Caco-2 (cell line): ENCODE measurements at regions of chr7 and their contacts with region 1.

Region 1: DNA sequence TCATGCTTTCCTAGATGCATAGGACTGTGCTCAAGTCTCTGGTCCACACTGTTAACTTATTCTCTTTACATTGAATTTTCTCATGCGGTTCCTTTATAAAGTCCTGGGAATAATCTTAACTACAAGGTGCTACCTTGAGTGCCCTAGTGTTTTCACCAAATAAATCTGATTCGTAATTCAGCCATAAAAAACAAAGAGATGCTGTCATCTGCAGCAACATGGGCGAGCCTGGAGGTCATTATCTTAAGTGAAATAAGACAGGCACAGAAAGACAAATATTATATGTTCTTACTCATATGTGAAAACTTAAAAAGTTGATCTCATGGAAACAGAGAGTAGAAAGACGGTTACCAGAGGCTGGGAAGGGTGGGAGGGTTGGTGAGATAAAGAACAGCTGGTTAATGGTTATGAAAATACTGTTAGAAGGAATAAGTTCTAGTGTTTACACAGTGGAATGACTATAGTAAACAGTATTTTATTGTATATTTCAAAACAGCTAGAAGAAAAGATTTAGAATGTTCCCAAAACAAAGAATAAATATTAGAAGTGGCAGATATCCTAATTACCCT is 38.3 kb downstream of the NT5C3A start:
- DNase-seq: no peak
- H3K4me3 ChIP-seq: no peak overlapping the region
- H3K4me3 Mint-ChIP-seq: no peak overlapping the region
- H3K27ac Mint-ChIP-seq: no peak overlapping the region
- H3K4me1 ChIP-seq: no peaks in the 10 kb centered on the region
- H3K4me1 Mint-ChIP-seq: no peaks in the 10 kb centered on the region
- H3K27me3 ChIP-seq: no peaks in the 10 kb centered on the region
- H3K27me3 Mint-ChIP-seq: no peaks in the 10 kb centered on the region
- CTCF ChIP-seq: no peak

Region 2: DNA sequence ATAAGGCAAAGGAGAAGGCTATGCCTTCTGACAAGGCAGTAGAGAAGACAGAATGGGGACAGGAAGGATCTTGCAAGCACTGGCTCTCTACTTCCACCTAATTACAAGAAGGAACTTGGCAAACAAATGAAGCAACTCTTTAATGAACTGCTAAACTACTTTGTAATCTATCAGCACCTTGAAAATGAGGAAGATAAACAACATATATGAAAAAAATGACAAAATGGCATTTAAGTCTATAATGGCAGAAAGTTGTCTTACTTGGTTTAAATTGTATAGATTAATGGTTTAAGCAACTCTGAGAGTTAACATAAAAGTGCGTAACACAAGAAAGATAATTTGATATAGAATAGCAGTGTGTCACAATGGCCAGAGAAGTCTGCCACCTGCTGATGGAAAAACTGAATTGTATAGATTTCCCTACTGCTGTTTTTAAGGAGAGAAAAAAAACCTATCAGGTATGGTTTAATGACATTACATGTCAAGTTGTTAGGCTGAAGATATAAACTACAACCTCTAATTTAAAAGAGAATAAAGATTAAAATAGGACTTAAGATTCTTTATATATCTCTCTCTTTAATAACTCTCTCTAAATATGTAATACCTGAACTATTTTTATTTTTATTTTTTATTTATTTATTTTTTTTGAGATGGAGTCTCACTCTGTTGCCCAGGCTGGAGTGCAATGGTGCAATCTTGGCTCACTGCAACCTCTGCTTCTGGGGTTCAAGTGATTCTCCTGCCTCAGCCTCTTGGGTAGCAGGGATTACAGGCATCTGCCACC is 26.5 kb after region 1 on chr7:
- CTCF ChIA-PET with region 1: no interaction called
- POLR2A ChIA-PET with region 1: no interaction called
- intact Hi-C with region 1: loop called (anchors 5 kb)
- DNase-seq: peak in 1 of 2 experiments; percentile 60
- H3K4me3 ChIP-seq: no peak overlapping the region
- H3K4me3 Mint-ChIP-seq: no peak overlapping the region
- H3K27ac Mint-ChIP-seq: no peak overlapping the region
- H3K4me1 ChIP-seq: no peaks in the 10 kb centered on the region
- H3K4me1 Mint-ChIP-seq: peaks cover 12% of the 10 kb centered on the region
- H3K27me3 ChIP-seq: no peaks in the 10 kb centered on the region
- H3K27me3 Mint-ChIP-seq: no peaks in the 10 kb centered on the region
- CTCF ChIP-seq: peak; percentile 37 to 66